ENCODE measurements at regions of chr15 and their contacts with region 1.

Region 1: DNA sequence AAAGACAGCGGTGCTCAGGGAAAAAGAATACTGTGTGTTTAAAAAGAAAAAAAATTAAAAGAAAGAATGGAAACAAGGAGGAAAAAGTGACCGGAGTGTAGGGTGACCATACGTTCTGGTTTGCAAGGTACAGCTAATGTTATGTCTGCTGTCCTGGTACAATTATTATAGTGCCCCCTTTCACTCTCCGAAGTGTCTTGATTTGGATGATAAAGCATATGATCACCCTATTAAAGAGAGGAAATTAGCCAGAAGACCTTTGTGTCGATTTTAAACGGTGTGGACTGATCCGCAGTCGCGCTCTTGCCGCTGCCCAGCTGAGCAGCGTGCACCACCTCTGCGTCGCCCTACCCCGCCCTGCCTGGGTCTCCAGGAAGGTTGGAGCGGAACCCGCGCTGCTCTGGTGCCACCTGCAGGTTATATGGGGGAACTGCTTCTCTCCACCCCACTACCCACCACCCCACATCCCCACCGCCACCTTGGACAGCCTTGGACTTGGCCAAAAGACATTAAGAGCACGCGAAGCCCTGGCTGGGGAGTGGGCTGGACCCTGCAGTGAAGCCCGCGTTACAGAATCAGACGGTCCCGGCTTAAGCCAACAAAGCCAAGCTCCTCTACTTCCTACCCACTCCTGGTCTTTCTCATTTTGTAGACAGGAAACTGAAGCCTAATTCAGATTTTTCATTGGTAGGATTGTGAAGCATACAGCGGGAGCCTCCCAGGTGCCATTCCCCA is 41.2 kb upstream of the UBE2Q2 start:
- DNase-seq: peak; percentile 78 to 88 (median 84)
- H3K4me3 ChIP-seq: peak overlapping the region in 1 of 4 donors; percentile 27
- H3K27ac ChIP-seq: no peak overlapping the region
- H3K4me1 ChIP-seq: peaks cover 0 to 8% of the 10 kb centered on the region in 2 donors
- H3K27me3 ChIP-seq: peaks cover 17% of the 10 kb centered on the region
- CTCF ChIP-seq: peak; percentile 64 to 95 (median 84)
- POLR2A ChIP-seq: no peak

Region 2: GRCh38 chr15:75684642-75685041 is 117.4 kb before region 1 on chr15:
- intact Hi-C with region 1: loop called in 1 of 2 experiments (anchors 10 kb)
- DNase-seq: no peak
- H3K4me3 ChIP-seq: no peak overlapping the region
- H3K27ac ChIP-seq: no peak overlapping the region
- H3K4me1 ChIP-seq: no peaks in the 10 kb centered on the region
- H3K27me3 ChIP-seq: no peaks in the 10 kb centered on the region
- CTCF ChIP-seq: no peak
- POLR2A ChIP-seq: no peak

Region 3: DNA sequence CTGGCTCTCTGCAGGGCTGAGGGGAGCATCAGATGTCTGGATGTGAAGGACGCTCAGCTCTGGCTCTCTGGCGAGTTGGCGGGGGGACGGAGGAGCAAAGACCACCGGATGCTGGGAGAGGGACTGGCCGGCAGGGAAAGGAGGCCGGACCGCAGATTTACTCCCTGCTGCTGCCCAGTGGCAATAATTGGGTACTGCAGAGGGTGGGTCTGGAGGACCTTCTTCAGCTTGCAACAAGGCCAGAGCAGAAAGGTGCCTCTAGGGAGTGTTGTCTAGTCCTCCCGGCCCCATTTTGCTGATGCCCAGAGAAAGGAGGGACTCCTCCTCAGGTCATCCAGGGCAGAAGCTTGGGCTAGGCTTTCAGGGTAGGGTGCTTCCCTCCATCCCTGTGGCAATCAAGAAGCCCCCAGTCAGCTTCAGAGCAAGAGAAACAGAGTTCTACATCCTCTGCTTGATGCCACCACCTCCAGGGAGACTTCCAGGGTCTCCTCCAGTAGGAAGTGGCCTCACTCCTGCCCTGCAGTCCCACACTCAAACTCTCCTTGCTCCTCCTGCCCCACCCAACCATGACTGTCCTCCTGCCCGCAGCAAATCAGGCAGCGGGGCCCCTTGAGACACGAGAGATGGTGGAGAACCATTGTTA is 69.1 kb before region 1 on chr15:
- intact Hi-C with region 1: loop called (anchors 5 kb)
- DNase-seq: peak; percentile 59 to 88 (median 77)
- H3K4me3 ChIP-seq: no peak overlapping the region
- H3K27ac ChIP-seq: peak overlapping the region in 1 of 5 donors; percentile 47
- H3K4me1 ChIP-seq: peaks cover 0 to 19% of the 10 kb centered on the region in 2 donors
- H3K27me3 ChIP-seq: no peaks in the 10 kb centered on the region
- CTCF ChIP-seq: peak; percentile 76 to 92 (median 87)
- POLR2A ChIP-seq: no peak

Region 4: DNA sequence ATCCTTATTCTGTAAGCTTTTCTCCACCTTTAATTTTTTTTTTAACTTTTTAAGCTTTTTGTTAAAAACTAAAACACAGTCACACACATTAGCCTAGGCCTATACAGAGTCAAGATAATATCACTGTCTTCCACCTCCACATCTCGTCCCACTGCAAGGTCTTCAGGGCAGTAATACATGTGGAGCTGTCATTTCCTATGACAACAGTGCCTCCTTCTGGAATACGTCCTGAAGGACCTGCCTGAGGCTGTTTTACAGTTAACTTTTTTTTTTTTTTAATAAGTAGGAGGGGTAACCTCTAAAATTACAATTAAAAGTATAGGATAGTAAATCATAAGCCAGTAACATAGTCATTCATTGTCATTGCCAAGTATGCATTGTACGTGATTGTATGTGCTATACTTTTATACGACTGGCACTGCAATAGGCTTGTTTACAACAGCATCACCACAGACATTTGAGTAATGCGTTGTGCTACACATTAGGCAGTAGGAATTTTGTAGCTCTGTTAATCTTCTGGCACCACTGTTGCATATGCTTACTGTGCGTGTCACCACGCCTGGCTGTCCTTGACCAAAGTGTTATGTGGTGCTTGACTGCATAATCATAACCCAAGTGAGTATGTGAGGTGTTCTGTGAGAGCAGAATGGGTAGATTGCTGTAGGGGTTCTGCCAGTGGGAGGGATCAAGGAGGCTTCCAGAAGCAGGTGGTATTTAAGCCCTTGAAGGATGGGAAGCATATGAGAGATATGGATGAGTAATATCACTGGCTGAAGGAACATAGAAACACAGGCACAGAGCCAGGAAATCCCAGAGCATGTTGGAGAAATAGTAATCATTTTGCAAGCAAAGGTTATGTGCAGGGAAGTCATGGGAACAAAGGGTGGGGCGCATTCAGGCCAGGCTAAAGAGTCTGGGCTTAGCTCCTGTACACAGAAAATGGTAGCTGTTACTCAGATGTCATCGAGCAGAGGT is 120.0 kb after region 1 on chr15:
- intact Hi-C with region 1: loop called in 1 of 2 experiments (anchors 10 kb)
- DNase-seq: peak; percentile 51 to 84 (median 78)
- H3K4me3 ChIP-seq: no peak overlapping the region
- H3K27ac ChIP-seq: peak overlapping the region in 2 of 5 donors; percentile 25 to 41
- H3K4me1 ChIP-seq: peaks cover 9 to 18% of the 10 kb centered on the region in 2 donors
- H3K27me3 ChIP-seq: no peaks in the 10 kb centered on the region
- CTCF ChIP-seq: peak; percentile 18 to 69 (median 55)
- POLR2A ChIP-seq: no peak